Caco-2 (cell line): ENCODE measurements at regions of chr10 and their contacts with region 1.

Region 1: DNA sequence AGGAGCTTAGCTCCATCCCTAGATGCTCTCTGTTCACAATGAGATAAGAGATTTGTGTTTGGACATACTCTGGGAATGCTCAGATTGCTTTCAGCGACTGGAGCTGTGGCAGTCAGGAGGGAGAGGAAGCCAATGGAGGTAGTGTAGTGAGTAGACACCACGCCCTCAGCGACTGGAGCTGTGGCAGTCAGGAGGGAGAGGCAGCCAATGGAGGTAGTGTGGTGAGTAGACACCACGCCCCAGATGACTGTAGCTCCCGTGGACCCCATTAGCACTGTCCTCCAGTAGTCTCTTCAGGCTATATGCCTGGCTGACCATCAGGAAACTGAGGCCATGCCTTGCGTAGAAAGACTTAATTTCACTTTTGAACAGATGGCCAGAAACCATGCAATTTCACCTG is 1033.8 kb downstream of the NRG3 start:
- DNase-seq: no peak
- H3K4me3 ChIP-seq: no peak overlapping the region
- H3K4me3 Mint-ChIP-seq: no peak overlapping the region
- H3K27ac Mint-ChIP-seq: no peak overlapping the region
- H3K4me1 ChIP-seq: no peaks in the 10 kb centered on the region
- H3K4me1 Mint-ChIP-seq: no peaks in the 10 kb centered on the region
- H3K27me3 ChIP-seq: no peaks in the 10 kb centered on the region
- H3K27me3 Mint-ChIP-seq: no peaks in the 10 kb centered on the region
- CTCF ChIP-seq: no peak

Region 2: DNA sequence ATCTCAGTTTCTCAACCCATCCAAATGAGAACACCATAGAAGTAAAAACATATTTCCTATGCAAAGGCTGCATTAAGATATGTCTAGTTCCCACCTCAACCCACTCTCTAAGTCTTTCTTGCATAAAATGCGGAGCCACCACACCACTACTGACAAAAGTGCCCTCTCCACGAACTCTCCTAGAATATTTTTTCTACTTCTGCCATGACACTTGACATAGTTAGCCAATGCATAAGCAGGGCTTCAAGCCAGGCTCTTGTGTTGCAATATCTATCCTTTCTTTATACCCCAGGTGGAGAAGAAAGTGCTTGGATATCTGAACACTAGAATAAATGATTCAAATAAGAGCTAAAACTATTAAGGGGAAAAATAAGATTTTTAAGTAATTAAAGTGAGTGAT is 568.6 kb before region 1 on chr10:
- CTCF ChIA-PET with region 1: no interaction called
- POLR2A ChIA-PET with region 1: no interaction called
- intact Hi-C with region 1: loop called (anchors 5 kb)
- DNase-seq: no peak
- H3K4me3 ChIP-seq: no peak overlapping the region
- H3K4me3 Mint-ChIP-seq: no peak overlapping the region
- H3K27ac Mint-ChIP-seq: no peak overlapping the region
- H3K4me1 ChIP-seq: no peaks in the 10 kb centered on the region
- H3K4me1 Mint-ChIP-seq: no peaks in the 10 kb centered on the region
- H3K27me3 ChIP-seq: no peaks in the 10 kb centered on the region
- H3K27me3 Mint-ChIP-seq: no peaks in the 10 kb centered on the region
- CTCF ChIP-seq: no peak

Region 3: GRCh38 chr10:82925547-82925946 is 16.8 kb after region 1 on chr10:
- CTCF ChIA-PET with region 1: no interaction called
- POLR2A ChIA-PET with region 1: no interaction called
- intact Hi-C with region 1: no loop called
- DNase-seq: no peak
- H3K4me3 ChIP-seq: no peak overlapping the region
- H3K4me3 Mint-ChIP-seq: no peak overlapping the region
- H3K27ac Mint-ChIP-seq: no peak overlapping the region
- H3K4me1 ChIP-seq: peaks cover 6% of the 10 kb centered on the region; the same call in 1 of the 2 replicates
- H3K4me1 Mint-ChIP-seq: peaks cover 20% of the 10 kb centered on the region
- H3K27me3 ChIP-seq: no peaks in the 10 kb centered on the region
- H3K27me3 Mint-ChIP-seq: no peaks in the 10 kb centered on the region
- CTCF ChIP-seq: no peak